ENCODE measurements at regions of chr17 and their contacts with region 1.

Region 1: DNA sequence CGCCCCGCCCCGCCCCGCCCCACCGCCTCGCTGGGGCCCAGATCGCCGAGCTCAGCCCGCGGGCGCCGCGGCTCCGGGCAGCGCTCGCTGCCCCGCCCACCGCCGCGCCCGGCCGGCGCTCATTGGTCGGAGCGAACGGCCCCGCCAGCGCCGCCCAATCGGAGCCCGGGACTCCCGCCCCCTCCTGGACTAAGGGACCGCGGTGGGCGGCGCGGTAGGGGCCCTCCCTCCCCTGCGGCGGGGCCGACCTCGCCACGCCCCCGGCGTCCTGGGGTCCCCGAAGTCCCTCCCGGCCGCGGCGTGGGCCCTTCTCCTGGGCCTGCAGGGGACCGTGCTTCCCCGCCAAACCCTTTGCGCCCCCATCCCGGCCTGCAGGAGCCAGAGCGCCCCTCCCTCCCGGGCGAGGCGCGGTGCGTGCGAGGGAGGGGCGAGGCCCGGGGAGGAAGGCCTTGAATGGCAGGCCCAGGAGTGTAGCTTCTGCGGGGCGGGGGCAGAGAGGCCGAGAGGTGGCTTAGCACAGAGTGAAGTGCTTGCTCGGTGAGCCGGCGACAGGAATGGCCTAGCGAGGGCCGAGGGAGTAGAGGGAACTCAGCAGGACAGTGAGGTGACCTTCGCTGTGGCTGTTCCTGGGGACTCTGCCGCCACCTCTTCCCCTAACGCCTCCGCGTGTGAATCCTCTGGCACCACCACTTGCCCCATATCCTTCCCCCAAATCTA is at the start of gene CAMKK1:
- DNase-seq: peak; percentile 95
- ATAC-seq: peak; percentile 86
- H3K4me3 ChIP-seq: peak within 1 kb of the TSS; percentile 14 to 75 (median 64)
- H3K4me3 Mint-ChIP-seq: peak within 1 kb of the TSS; percentile 93
- H3K27ac ChIP-seq: peak within 1 kb of the TSS; percentile 56 to 57
- H3K27ac Mint-ChIP-seq: peak within 1 kb of the TSS; percentile 89
- H3K4me1 ChIP-seq: peaks cover 20 to 42% of the 10 kb centered on the region in 2 donors
- H3K4me1 Mint-ChIP-seq: peaks cover 40% of the 10 kb centered on the region
- H3K27me3 ChIP-seq: no peaks in the 10 kb centered on the region
- H3K27me3 Mint-ChIP-seq: no peaks in the 10 kb centered on the region
- CTCF ChIP-seq: no peak
- total RNA-seq, gene CAMKK1: 35.9 and 37.1 TPM in 2 replicates

Region 2: GRCh38 chr17:3762922-3763776 is 130.0 kb before region 1 on chr17:
- CTCF ChIA-PET with region 1: no interaction called
- POLR2A ChIA-PET with region 1: no interaction called
- intact Hi-C with region 1: no loop called
- DNase-seq: no peak
- ATAC-seq: peak; percentile 43
- H3K4me3 ChIP-seq: no peak overlapping the region
- H3K4me3 Mint-ChIP-seq: peak overlapping the region; percentile 59
- H3K27ac ChIP-seq: no peak overlapping the region
- H3K27ac Mint-ChIP-seq: peak overlapping the region; percentile 88
- H3K4me1 ChIP-seq: peaks cover 10 to 22% of the 10 kb centered on the region in 2 donors
- H3K4me1 Mint-ChIP-seq: peaks cover 20% of the 10 kb centered on the region
- H3K27me3 ChIP-seq: no peaks in the 10 kb centered on the region
- H3K27me3 Mint-ChIP-seq: no peaks in the 10 kb centered on the region
- CTCF ChIP-seq: no peak

Region 3: GRCh38 chr17:3835410-3836229 is 57.5 kb before region 1 on chr17:
- CTCF ChIA-PET with region 1: no interaction called
- POLR2A ChIA-PET with region 1: no interaction called
- intact Hi-C with region 1: no loop called
- DNase-seq: no peak
- ATAC-seq: no peak
- H3K4me3 ChIP-seq: no peak overlapping the region
- H3K4me3 Mint-ChIP-seq: no peak overlapping the region
- H3K27ac ChIP-seq: no peak overlapping the region
- H3K27ac Mint-ChIP-seq: no peak overlapping the region
- H3K4me1 ChIP-seq: no peaks in the 10 kb centered on the region
- H3K4me1 Mint-ChIP-seq: peaks cover 2% of the 10 kb centered on the region
- H3K27me3 ChIP-seq: no peaks in the 10 kb centered on the region
- H3K27me3 Mint-ChIP-seq: no peaks in the 10 kb centered on the region
- CTCF ChIP-seq: no peak

Region 4: GRCh38 chr17:3907483-3908216 is 14.5 kb after region 1 on chr17:
- CTCF ChIA-PET with region 1: interaction called, 48 read pairs
- POLR2A ChIA-PET with region 1: interaction called, 15 read pairs
- intact Hi-C with region 1: loop called (anchors 1 kb)
- DNase-seq: no peak
- ATAC-seq: no peak
- H3K4me3 ChIP-seq: no peak overlapping the region
- H3K4me3 Mint-ChIP-seq: no peak overlapping the region
- H3K27ac ChIP-seq: no peak overlapping the region
- H3K27ac Mint-ChIP-seq: peak overlapping the region; percentile 53
- H3K4me1 ChIP-seq: peaks cover 42 to 56% of the 10 kb centered on the region in 2 donors
- H3K4me1 Mint-ChIP-seq: peaks cover 54% of the 10 kb centered on the region
- H3K27me3 ChIP-seq: no peaks in the 10 kb centered on the region
- H3K27me3 Mint-ChIP-seq: no peaks in the 10 kb centered on the region
- CTCF ChIP-seq: no peak

Region 5: GRCh38 chr17:3944485-3945388 is 51.6 kb after region 1 on chr17:
- CTCF ChIA-PET with region 1: interaction called, 3 read pairs
- POLR2A ChIA-PET with region 1: no interaction called
- intact Hi-C with region 1: loop called (anchors 2 kb)
- DNase-seq: peak; percentile 48
- ATAC-seq: peak; percentile 82
- H3K4me3 ChIP-seq: no peak overlapping the region
- H3K4me3 Mint-ChIP-seq: no peak overlapping the region
- H3K27ac ChIP-seq: no peak overlapping the region
- H3K27ac Mint-ChIP-seq: peak overlapping the region; percentile 26
- H3K4me1 ChIP-seq: no peaks in the 10 kb centered on the region
- H3K4me1 Mint-ChIP-seq: no peaks in the 10 kb centered on the region
- H3K27me3 ChIP-seq: no peaks in the 10 kb centered on the region
- H3K27me3 Mint-ChIP-seq: no peaks in the 10 kb centered on the region
- CTCF ChIP-seq: no peak